ENCODE measurements at regions of chr5 and their contacts with region 1.

Region 1: GRCh38 chr5:68303038-68303738 is 87.6 kb downstream of the PIK3R1 start:
- DNase-seq: no peak
- ATAC-seq: peak; percentile 34; the same call in 2 of the 3 replicates
- H3K4me3 ChIP-seq: no peak overlapping the region
- H3K27ac ChIP-seq: no peak overlapping the region
- H3K4me1 ChIP-seq: peaks cover 0 to 8% of the 10 kb centered on the region in 2 experiments; a peak in 2 of 5 replicates
- H3K27me3 ChIP-seq: peaks cover 5 to 11% of the 10 kb centered on the region in 2 experiments; a peak in 2 of 5 replicates
- CTCF ChIP-seq: no peak
- EP300 ChIP-seq: no peak
- POLR2A ChIP-seq: no peak
- RAD21 ChIP-seq: no peak

Region 2: GRCh38 chr5:68379275-68380036 is 76.3 kb after region 1 on chr5:
- CTCF ChIA-PET with region 1: no interaction called
- POLR2A ChIA-PET with region 1: no interaction called
- in situ Hi-C with region 1: no loop called
- intact Hi-C with region 1: loop called (anchors 5 kb)
- DNase-seq: no peak
- ATAC-seq: peak; percentile 16; the same call in 1 of the 3 replicates
- H3K4me3 ChIP-seq: no peak overlapping the region
- H3K27ac ChIP-seq: no peak overlapping the region
- H3K4me1 ChIP-seq: peaks cover 0 to 29% of the 10 kb centered on the region in 2 experiments; a peak in 2 of 5 replicates
- H3K27me3 ChIP-seq: no peaks in the 10 kb centered on the region
- CTCF ChIP-seq: no peak
- EP300 ChIP-seq: no peak
- POLR2A ChIP-seq: no peak
- RAD21 ChIP-seq: no peak